ENCODE measurements at regions of chr11 and their contacts with region 1.

Region 1: DNA sequence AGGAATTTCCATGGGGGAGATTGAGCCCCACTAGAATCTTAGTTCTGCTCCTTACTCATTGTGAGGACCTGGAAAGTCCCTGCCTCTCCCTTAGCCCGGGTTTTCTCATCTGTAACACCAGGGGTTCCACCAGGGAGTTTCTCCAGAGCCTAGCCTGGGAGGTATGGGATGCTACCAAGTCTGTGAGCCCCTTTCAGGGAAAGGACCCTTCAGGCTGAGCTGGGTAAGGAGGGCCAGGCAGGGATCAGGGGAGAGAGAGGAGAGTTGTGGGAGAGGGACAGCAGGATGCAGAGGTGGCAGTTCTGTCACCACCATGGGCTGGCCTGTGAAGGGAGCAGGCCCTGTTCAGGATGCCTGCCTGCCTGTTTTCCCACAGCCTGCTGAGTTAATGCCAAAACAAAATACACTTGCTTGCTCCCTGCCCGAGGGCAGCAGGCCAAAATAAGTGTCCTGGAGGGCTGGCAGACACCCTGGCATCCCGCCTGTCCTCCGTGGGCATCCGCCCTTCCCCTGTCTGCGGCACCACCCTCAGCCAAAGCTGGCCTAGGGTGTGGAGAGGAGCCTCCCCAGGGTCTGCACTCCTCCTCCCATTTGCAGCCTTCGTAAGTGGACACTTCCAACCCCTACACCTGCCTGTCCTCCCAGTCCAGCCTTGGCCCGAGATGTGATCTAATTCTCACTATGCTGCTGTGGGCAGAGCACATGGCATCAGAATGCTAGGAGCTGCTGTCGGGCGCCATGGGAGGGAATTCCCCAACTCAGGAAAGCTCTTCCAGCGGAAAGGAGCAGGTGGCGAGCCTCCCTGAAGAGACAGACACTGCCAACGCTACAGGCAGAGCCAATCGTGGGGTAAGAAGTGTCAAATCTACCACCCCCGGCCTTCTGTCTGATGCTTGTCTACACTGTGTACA is 5.9 kb upstream of the FCHSD2 start:
- DNase-seq: no peak
- H3K4me3 ChIP-seq: no peak overlapping the region
- H3K27ac ChIP-seq: no peak overlapping the region
- H3K4me1 ChIP-seq: peaks cover 7 to 15% (median 9%) of the 10 kb centered on the region in 4 experiments
- H3K27me3 ChIP-seq: no peaks in the 10 kb centered on the region; a peak in 1 of 7 replicates
- CTCF ChIP-seq: no peak
- EP300 ChIP-seq: no peak
- POLR2A ChIP-seq: no peak
- RAD21 ChIP-seq: no peak

Region 2: GRCh38 chr11:73164803-73165540 is 16.9 kb after region 1 on chr11:
- CTCF ChIA-PET with region 1: interaction called, 13 read pairs
- POLR2A ChIA-PET with region 1: no interaction called
- DNase-seq: no peak
- H3K4me3 ChIP-seq: no peak overlapping the region
- H3K27ac ChIP-seq: no peak overlapping the region
- H3K4me1 ChIP-seq: peaks cover 0 to 5% (median 3%) of the 10 kb centered on the region in 4 experiments; a peak in 2 of 7 replicates
- H3K27me3 ChIP-seq: no peaks in the 10 kb centered on the region; a peak in 1 of 7 replicates
- CTCF ChIP-seq: no peak
- EP300 ChIP-seq: no peak
- POLR2A ChIP-seq: no peak
- RAD21 ChIP-seq: no peak

Measured in H1 (cell line).